Stomach (tissue), 19 donors: ENCODE measurements at regions of chr17 and their contacts with region 1.

Region 1: DNA sequence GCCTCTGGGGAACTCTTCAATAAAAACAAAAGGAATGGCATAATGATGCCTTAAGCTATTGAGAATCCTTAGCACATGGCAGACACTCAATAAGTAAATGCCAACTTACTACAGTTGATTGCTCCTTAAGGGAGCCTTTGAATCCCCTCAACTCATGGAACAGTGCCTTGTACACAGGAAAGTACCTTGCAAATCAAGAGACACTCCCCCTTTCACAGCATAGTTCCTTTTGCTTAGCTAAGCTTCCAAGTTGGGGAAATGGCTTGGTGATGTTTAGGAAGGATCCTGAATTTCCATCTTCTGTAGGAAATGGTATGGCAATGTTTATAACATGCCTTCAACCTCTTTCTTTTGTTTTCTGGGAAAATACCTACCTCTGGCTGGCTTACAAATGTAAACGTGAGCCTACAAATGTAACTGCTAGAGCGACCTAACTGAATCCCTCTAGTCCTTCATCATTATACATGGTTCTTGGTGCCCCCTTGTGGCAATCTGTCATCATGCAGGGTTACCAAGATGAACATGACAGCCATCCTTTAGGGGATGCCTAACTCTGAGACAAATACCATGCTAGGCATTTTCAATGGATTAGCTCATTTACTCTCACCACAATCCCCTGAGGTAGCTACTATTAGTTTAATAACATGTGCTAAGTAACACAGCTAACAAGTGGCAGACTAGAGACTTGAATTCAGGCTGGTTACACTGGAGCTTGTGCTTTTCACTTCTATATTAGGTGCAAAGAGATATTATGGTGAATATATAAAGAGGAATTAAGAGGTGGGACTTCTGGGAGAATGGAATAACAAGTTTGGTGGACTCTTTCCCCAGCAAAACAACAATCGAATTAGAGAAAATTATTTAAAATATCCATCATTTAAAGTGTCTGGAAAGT is 65.0 kb downstream of the MMD start:
- DNase-seq: peak; percentile 74 to 76
- H3K4me3 ChIP-seq: no peak overlapping the region
- H3K27ac ChIP-seq: no peak overlapping the region
- H3K4me1 ChIP-seq: no peaks in the 10 kb centered on the region
- H3K27me3 ChIP-seq: no peaks in the 10 kb centered on the region
- CTCF ChIP-seq: peak in 5 of 7 experiments; percentile 54 to 70 (median 68)
- EP300 ChIP-seq: no peak
- POLR2A ChIP-seq: no peak

Region 2: GRCh38 chr17:54992797-54993639 is 363.7 kb before region 1 on chr17:
- intact Hi-C with region 1: loop called (anchors 5 kb)
- DNase-seq: peak in 1 of 2 donors; percentile 81
- H3K4me3 ChIP-seq: no peak overlapping the region
- H3K27ac ChIP-seq: no peak overlapping the region
- H3K4me1 ChIP-seq: no peaks in the 10 kb centered on the region
- H3K27me3 ChIP-seq: no peaks in the 10 kb centered on the region
- CTCF ChIP-seq: peak in 5 of 7 experiments; percentile 33 to 63 (median 54)
- EP300 ChIP-seq: no peak
- POLR2A ChIP-seq: no peak

Region 3: DNA sequence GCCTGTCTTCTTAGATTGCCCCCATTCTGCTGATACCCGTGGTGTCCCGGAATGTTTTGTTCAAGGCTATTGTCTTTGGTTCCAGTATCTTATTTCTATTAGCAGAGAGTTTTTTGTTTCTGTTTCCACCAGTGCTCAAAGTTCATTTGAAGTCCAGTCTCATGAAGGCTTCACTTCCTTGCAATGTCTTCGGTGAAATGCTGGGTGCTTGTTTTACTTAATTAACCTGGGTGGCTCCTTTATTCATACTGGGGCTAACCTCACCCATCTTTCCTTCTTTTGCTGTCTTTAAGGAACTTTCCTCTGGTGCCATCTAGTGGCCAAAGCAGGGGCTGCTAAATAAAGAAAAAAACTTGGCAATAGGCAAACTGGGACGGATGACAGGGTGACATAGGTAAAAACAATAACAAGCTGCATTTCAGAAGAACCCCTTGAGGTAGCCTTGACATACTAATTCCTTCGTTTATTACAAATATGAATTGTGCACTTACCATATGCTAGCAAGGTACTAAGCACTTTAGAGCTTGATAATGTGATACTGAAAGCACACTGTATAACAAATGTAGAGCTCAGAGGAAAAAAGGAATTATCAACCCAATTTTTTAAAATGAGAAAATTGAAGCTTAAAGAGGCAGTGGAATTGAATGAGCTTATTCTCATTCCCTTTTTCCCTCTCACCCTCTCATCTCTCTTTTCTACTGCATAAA is 157.4 kb after region 1 on chr17:
- intact Hi-C with region 1: loop called (anchors 5 kb)
- DNase-seq: peak; percentile 76 to 86
- H3K4me3 ChIP-seq: no peak overlapping the region
- H3K27ac ChIP-seq: no peak overlapping the region
- H3K4me1 ChIP-seq: peaks cover 0 to 9% (median 4%) of the 10 kb centered on the region in 4 donors
- H3K27me3 ChIP-seq: no peaks in the 10 kb centered on the region
- CTCF ChIP-seq: peak in 5 of 7 experiments; percentile 55 to 95 (median 88)
- EP300 ChIP-seq: no peak
- POLR2A ChIP-seq: no peak